ENCODE measurements at regions of chr10 and their contacts with region 1.

Region 1: GRCh38 chr10:63268798-63269503 is 135.8 kb downstream of the NRBF2 start:
- DNase-seq: peak; percentile 95
- ATAC-seq: peak; percentile 98
- H3K4me3 ChIP-seq: peak overlapping the region; percentile 51 to 64 (median 54)
- H3K27ac ChIP-seq: peak overlapping the region; percentile 88 to 96 (median 90)
- H3K4me1 ChIP-seq: peaks cover 26% of the 10 kb centered on the region in 2 donors
- H3K27me3 ChIP-seq: no peaks in the 10 kb centered on the region
- CTCF ChIP-seq: peak; percentile 51 to 62 (median 55)
- POLR2A ChIP-seq: peak; percentile 82 to 94

Region 2: DNA sequence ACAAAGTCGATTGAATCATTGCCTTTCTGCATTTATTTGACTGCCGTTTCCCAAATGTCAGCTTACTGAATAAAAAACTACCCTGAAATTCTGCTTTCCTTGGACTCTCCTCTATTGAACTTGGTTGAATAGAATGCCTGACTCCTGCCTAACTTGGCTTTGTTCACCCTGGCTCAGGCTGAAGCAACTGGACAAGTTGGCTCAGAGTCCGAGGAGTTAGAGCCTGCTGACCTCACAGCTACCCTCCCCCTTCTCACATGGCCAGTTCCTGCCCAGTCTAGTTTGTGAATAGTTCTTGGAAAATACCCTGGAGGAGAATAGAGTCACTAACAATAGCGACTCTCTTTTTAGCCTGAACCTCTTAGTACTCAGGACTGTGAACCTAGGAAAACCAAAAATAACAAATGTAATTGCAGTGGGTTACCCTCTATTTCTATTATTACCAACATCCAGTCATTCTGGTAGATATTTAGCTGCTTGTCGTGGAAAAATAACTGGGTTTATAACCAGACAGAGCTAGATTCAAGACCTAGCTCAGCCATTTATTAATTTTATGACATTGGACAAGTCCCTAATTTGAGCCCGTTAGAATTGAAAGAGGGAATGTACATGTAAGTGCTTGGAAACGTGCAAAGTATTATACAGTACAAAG is 153.1 kb before region 1 on chr10:
- in situ Hi-C with region 1: no loop called
- intact Hi-C with region 1: loop called (anchors 5 kb)
- DNase-seq: peak; percentile 93 to 96
- ATAC-seq: peak; percentile 93 to 95
- H3K4me3 ChIP-seq: peak overlapping the region in 1 of 4 donors; percentile 6
- H3K27ac ChIP-seq: peak overlapping the region; percentile 87 to 99 (median 93)
- H3K4me1 ChIP-seq: peaks cover 30 to 32% of the 10 kb centered on the region in 2 donors
- H3K27me3 ChIP-seq: no peaks in the 10 kb centered on the region
- CTCF ChIP-seq: peak in 1 of 5 experiments; percentile 7
- POLR2A ChIP-seq: peak; percentile 51 to 56

Region 3: DNA sequence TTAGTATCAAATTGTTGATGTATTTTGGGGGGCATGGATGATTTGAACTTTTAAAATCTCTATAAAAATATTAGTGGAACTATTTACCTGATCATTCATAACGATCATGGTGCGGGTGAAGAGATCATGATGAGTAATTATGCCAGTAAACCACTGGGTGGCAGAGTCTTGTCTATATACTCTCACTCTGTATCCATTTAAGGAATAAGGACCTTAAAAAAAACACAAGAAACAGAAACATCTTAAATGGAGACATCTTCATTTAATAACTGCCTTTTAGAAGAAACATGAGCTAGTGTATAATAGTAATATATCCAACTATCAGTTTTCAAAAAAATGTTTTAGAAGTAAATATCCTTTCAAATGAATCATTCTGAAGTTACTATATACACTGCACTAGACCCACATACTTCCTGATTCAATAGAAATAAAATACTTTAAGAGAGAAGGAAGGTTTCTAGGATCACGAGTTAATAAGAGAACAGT is 51.8 kb before region 1 on chr10:
- in situ Hi-C with region 1: no loop called
- intact Hi-C with region 1: loop called (anchors 2 kb)
- DNase-seq: no peak
- ATAC-seq: peak; percentile 78 to 90
- H3K4me3 ChIP-seq: no peak overlapping the region
- H3K27ac ChIP-seq: peak overlapping the region in 3 of 4 donors; percentile 10 to 24 (median 23)
- H3K4me1 ChIP-seq: peaks cover 0 to 26% of the 10 kb centered on the region in 2 donors
- H3K27me3 ChIP-seq: no peaks in the 10 kb centered on the region
- CTCF ChIP-seq: peak; percentile 62 to 79 (median 67)
- POLR2A ChIP-seq: no peak

Region 4: GRCh38 chr10:63521416-63522276 is 252.7 kb after region 1 on chr10:
- in situ Hi-C with region 1: no loop called
- intact Hi-C with region 1: loop called (anchors 1 kb)
- DNase-seq: peak; percentile 42 to 64
- ATAC-seq: peak; percentile 81 to 86
- H3K4me3 ChIP-seq: peak overlapping the region; percentile 73 to 88 (median 80)
- H3K27ac ChIP-seq: peak overlapping the region; percentile 95 to 98 (median 98)
- H3K4me1 ChIP-seq: peaks cover 51 to 52% of the 10 kb centered on the region in 2 donors
- H3K27me3 ChIP-seq: no peaks in the 10 kb centered on the region
- CTCF ChIP-seq: peak in 1 of 5 experiments; percentile 6
- POLR2A ChIP-seq: peak; percentile 77 to 81

Measured in gastrocnemius medialis (tissue), 4 donors.